Ascending aorta (tissue), 2 donors: ENCODE measurements at regions of chr5 and their contacts with region 1.

Region 1: DNA sequence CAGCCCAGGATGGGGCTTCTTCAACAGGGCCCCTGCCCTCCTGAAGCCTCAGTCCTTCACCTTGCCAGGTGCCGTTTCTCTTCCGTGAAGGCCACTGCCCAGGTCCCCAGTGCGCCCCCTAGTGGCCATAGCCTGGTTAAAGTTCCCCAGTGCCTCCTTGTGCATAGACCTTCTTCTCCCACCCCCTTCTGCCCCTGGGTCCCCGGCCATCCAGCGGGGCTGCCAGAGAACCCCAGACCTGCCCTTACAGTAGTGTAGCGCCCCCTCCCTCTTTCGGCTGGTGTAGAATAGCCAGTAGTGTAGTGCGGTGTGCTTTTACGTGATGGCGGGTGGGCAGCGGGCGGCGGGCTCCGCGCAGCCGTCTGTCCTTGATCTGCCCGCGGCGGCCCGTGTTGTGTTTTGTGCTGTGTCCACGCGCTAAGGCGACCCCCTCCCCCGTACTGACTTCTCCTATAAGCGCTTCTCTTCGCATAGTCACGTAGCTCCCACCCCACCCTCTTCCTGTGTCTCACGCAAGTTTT is 23.6 kb downstream of the PCDHGC5 start:
- DNase-seq: peak in 1 of 2 donors; percentile 93
- H3K4me3 ChIP-seq: peak overlapping the region; percentile 52 to 78
- H3K27ac ChIP-seq: peak overlapping the region; percentile 98 to 99
- H3K4me1 ChIP-seq: peaks cover 36 to 51% of the 10 kb centered on the region in 2 donors
- H3K27me3 ChIP-seq: no peaks in the 10 kb centered on the region
- CTCF ChIP-seq: peak; percentile 83 to 87 (median 86)

Region 2: DNA sequence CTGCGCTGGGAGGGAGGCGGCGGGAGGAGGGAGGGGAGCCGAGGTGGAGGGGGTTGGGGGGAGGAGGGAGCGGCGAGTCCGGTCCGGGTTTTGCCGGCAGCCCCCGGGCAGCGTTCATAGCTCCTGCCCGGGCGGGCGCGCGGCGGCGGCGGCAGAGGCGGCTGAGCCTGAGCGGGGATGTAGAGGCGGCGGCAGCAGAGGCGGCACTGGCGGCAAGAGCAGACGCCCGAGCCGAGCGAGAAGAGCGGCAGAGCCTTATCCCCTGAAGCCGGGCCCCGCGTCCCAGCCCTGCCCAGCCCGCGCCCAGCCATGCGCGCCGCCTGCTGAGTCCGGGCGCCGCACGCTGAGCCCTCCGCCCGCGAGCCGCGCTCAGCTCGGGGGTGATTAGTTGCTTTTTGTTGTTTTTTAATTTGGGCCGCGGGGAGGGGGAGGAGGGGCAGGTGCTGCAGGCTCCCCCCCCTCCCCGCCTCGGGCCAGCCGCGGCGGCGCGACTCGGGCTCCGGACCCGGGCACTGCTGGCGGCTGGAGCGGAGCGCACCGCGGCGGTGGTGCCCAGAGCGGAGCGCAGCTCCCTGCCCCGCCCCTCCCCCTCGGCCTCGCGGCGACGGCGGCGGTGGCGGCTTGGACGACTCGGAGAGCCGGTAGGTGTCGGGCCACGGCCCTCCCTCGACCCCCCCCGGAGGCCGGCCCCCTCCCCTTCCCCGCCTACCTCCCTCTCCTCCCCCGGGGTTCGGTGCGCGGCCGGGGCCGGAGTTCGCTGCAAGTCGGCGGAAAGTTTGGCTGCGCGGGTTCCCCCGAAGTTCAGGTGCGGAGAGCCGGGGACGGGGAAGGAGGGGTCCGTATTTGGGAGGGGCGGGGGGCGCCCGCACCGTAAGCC is 1864.0 kb before region 1 on chr5 and contains the start of gene CXXC5:
- intact Hi-C with region 1: no loop called
- DNase-seq: peak in 1 of 2 donors; percentile 88
- H3K4me3 ChIP-seq: peak within 1 kb of the TSS; percentile 76 to 79
- H3K27ac ChIP-seq: peak within 1 kb of the TSS; percentile 96
- H3K4me1 ChIP-seq: peaks cover 15 to 28% of the 10 kb centered on the region in 2 donors
- H3K27me3 ChIP-seq: no peaks in the 10 kb centered on the region
- CTCF ChIP-seq: no peak
- total RNA-seq, gene CXXC5: 41.9 TPM

Region 3: GRCh38 chr5:141475625-141476131 is 36.8 kb before region 1 on chr5 and contains the start of gene PCDHGC3:
- intact Hi-C with region 1: loop called (anchors 1 kb)
- DNase-seq: peak; percentile 83 to 96
- H3K4me3 ChIP-seq: peak within 1 kb of the TSS; percentile 77 to 83
- H3K27ac ChIP-seq: peak within 1 kb of the TSS; percentile 90 to 92
- H3K4me1 ChIP-seq: peaks cover 15 to 34% of the 10 kb centered on the region in 2 donors
- H3K27me3 ChIP-seq: no peaks in the 10 kb centered on the region
- CTCF ChIP-seq: peak; percentile 25 to 57 (median 57)
- total RNA-seq, gene PCDHGC3: 51.4 TPM

Region 4: DNA sequence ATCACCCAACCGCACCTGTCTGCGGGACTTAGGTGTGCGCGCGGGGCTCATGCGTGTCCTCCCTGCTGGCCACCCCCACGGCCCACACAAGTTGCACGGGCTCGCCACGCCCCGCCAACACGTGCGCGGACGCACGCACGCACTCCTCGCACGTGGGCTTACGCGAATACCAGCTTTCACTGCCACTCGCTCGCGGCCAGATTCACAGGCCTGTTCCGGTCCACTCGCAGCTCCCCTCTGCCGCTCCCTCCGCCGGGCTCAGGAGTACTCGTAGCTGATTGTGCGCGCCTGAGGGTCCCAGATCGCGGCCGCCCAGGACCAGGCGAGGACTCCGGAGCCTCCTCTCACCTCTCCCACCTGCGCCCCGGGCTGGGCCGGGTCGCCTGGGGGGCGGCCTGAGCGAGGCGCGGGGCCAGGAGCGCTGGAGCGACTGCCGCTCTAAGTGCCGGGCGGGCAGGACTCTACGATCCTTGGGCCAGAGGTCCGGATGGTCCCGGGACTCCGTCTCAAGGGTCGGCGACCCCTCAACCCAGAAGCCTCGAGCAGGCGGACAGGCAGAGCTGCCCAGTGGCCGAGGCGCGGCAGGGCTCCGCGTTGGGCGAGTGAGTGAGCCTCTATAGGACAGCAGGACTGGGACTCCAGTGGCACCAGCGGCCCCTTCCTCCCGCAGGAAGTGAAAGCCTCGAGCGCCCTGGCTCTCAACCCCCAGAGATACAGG is 20.1 kb before region 1 on chr5:
- intact Hi-C with region 1: loop called (anchors 2 kb)
- DNase-seq: no peak
- H3K4me3 ChIP-seq: peak overlapping the region in 1 of 2 donors; percentile 13
- H3K27ac ChIP-seq: no peak overlapping the region
- H3K4me1 ChIP-seq: peaks cover 7 to 16% of the 10 kb centered on the region in 2 donors
- H3K27me3 ChIP-seq: no peaks in the 10 kb centered on the region
- CTCF ChIP-seq: no peak